ENCODE measurements at regions of chr15 and their contacts with region 1.

Region 1: GRCh38 chr15:58258501-58259270 is 120.5 kb downstream of the AQP9 start:
- DNase-seq: no peak
- ATAC-seq: no peak
- H3K4me3 ChIP-seq: no peak overlapping the region
- H3K4me3 Mint-ChIP-seq: no peak overlapping the region
- H3K27ac ChIP-seq: no peak overlapping the region
- H3K27ac Mint-ChIP-seq: no peak overlapping the region
- H3K4me1 ChIP-seq: no peaks in the 10 kb centered on the region
- H3K4me1 Mint-ChIP-seq: peaks cover 2% of the 10 kb centered on the region
- H3K27me3 ChIP-seq: peaks cover 0 to 3% of the 10 kb centered on the region in 2 experiments
- H3K27me3 Mint-ChIP-seq: no peaks in the 10 kb centered on the region
- CTCF ChIP-seq: no peak

Region 2: GRCh38 chr15:58241872-58242271 is 16.8 kb before region 1 on chr15:
- CTCF ChIA-PET with region 1: no interaction called
- POLR2A ChIA-PET with region 1: no interaction called
- intact Hi-C with region 1: loop called in 1 of 2 experiments (anchors 2 kb)
- DNase-seq: no peak
- ATAC-seq: no peak
- H3K4me3 ChIP-seq: no peak overlapping the region
- H3K4me3 Mint-ChIP-seq: no peak overlapping the region
- H3K27ac ChIP-seq: no peak overlapping the region
- H3K27ac Mint-ChIP-seq: no peak overlapping the region
- H3K4me1 ChIP-seq: no peaks in the 10 kb centered on the region
- H3K4me1 Mint-ChIP-seq: no peaks in the 10 kb centered on the region
- H3K27me3 ChIP-seq: no peaks in the 10 kb centered on the region
- H3K27me3 Mint-ChIP-seq: no peaks in the 10 kb centered on the region
- CTCF ChIP-seq: no peak

Region 3: DNA sequence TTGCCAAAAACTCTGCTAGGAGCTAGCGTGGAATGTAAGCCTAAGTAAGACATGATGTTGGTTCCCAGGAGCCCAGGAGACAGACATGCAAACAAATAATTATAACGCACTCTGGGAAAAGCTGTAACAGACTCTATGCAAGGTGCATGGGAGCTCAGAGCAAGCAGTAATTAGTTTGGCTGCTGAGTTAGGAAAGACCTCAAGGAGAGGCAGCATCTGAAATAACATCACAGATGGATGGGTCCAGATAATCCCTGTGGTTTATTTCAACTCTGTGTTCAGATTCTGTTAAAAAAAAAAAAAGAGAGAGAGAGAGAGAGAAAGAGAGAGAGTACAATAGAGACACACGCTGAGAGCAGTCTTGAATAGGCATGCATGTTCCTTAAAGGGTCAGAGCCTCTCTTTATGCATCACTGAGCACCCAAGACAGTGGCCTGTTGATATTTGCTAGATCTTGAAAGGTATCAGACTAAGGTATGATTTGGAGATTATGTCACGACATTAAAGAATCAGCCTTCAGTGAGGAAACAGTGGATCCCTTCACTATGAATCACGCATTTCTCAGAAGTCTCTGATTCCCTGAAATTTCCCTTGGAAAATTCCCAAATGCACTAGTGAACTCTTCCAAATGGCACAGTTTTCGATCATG is 48.8 kb after region 1 on chr15:
- CTCF ChIA-PET with region 1: no interaction called
- POLR2A ChIA-PET with region 1: no interaction called
- intact Hi-C with region 1: no loop called
- DNase-seq: no peak
- ATAC-seq: no peak
- H3K4me3 ChIP-seq: no peak overlapping the region
- H3K4me3 Mint-ChIP-seq: no peak overlapping the region
- H3K27ac ChIP-seq: no peak overlapping the region
- H3K27ac Mint-ChIP-seq: no peak overlapping the region
- H3K4me1 ChIP-seq: no peaks in the 10 kb centered on the region
- H3K4me1 Mint-ChIP-seq: peaks cover 25% of the 10 kb centered on the region
- H3K27me3 ChIP-seq: no peaks in the 10 kb centered on the region
- H3K27me3 Mint-ChIP-seq: no peaks in the 10 kb centered on the region
- CTCF ChIP-seq: no peak